ENCODE measurements at regions of chr2 and their contacts with region 1.

Region 1: DNA sequence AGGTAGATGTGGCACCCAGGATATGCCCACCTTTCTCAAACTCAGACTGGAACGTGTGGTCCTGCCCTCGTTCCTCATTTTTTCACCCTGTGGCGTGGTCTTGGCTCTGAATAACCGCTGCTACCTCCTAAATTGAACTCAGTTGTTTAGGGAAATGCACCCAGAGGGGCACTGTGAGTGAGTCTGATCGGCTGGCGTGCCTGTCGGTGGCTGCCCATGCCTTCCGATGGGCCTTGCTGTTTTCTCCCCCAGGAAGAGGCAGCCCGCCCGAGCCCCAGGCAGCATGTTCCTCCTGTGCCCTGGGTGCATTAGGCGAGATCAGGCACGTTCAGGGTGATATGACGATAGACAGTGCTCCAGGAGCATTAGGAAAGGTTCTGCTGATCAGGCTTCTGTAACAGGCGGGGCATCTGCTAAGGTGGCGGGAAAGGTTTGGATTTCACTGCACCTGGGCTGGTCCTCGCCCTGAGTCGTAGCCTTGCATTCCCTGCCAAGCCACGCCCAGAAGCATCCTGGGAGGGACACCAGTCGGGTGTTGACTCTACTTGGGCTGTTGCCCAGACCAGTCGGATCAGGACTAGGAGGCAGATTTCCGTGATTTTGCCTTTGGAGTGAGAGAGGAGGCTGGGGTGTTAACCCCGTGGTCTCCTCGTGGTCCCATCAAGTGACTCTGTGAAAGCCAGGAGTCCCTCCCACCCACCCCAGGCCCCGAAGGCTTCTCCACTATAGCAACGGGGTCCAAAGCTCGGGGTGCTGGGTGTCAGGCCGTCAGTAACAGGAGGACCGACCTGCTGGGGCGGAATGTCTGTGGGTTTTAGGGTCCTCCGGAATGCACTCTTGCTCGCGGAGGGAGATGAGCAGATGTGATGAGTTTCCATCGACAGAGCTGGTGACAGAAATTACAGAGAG is 75.1 kb downstream of the SH3BP4 start:
- DNase-seq: peak; percentile 98 to 99
- H3K4me3 ChIP-seq: peak overlapping the region; percentile 61
- H3K27ac ChIP-seq: peak overlapping the region; percentile 98
- H3K4me1 ChIP-seq: peaks cover 79% of the 10 kb centered on the region
- H3K27me3 ChIP-seq: no peaks in the 10 kb centered on the region
- CTCF ChIP-seq: no peak

Region 2: GRCh38 chr2:233867993-233868532 is 1158.8 kb before region 1 on chr2 and contains the start of gene MSL3B:
- CTCF ChIA-PET with region 1: no interaction called
- POLR2A ChIA-PET with region 1: interaction called, 15 read pairs
- intact Hi-C with region 1: no loop called
- DNase-seq: peak; percentile 46 to 75
- H3K4me3 ChIP-seq: peak within 1 kb of the TSS; percentile 64
- H3K27ac ChIP-seq: peak within 1 kb of the TSS; percentile 58
- H3K4me1 ChIP-seq: peaks cover 24% of the 10 kb centered on the region
- H3K27me3 ChIP-seq: peaks cover 5% of the 10 kb centered on the region; the same call in 1 of the 2 replicates
- CTCF ChIP-seq: no peak

Region 3: GRCh38 chr2:233882353-233882752 is 1144.5 kb before region 1 on chr2:
- CTCF ChIA-PET with region 1: no interaction called
- POLR2A ChIA-PET with region 1: no interaction called
- intact Hi-C with region 1: no loop called
- DNase-seq: no peak
- H3K4me3 ChIP-seq: no peak overlapping the region
- H3K27ac ChIP-seq: no peak overlapping the region
- H3K4me1 ChIP-seq: no peaks in the 10 kb centered on the region
- H3K27me3 ChIP-seq: peaks cover 15% of the 10 kb centered on the region; the same call in 1 of the 2 replicates
- CTCF ChIP-seq: no peak

Region 4: GRCh38 chr2:234881413-234882241 is 145.3 kb before region 1 on chr2:
- CTCF ChIA-PET with region 1: interaction called, 6 read pairs
- POLR2A ChIA-PET with region 1: no interaction called
- intact Hi-C with region 1: loop called (anchors 2 kb)
- DNase-seq: peak; percentile 88 to 92
- H3K4me3 ChIP-seq: peak overlapping the region; percentile 41; the same call in 1 of the 2 replicates
- H3K27ac ChIP-seq: peak overlapping the region; percentile 82
- H3K4me1 ChIP-seq: peaks cover 47% of the 10 kb centered on the region
- H3K27me3 ChIP-seq: no peaks in the 10 kb centered on the region
- CTCF ChIP-seq: peak; percentile 97

Region 5: GRCh38 chr2:234996069-234996940 is 30.6 kb before region 1 on chr2:
- CTCF ChIA-PET with region 1: no interaction called
- POLR2A ChIA-PET with region 1: interaction called, 3 read pairs
- intact Hi-C with region 1: loop called (anchors 1 kb)
- DNase-seq: peak in 1 of 2 experiments; percentile 89
- H3K4me3 ChIP-seq: no peak overlapping the region
- H3K27ac ChIP-seq: 0 out of 2 replicates have a peak overlapping the region, but pooled peaks have one; percentile 6
- H3K4me1 ChIP-seq: peaks cover 41% of the 10 kb centered on the region
- H3K27me3 ChIP-seq: no peaks in the 10 kb centered on the region
- CTCF ChIP-seq: no peak

Region 6: GRCh38 chr2:235045336-235045972 is 18.6 kb after region 1 on chr2:
- CTCF ChIA-PET with region 1: interaction called, 11 read pairs
- POLR2A ChIA-PET with region 1: interaction called, 5 read pairs
- intact Hi-C with region 1: loop called (anchors 1 kb)
- DNase-seq: peak; percentile 75 to 94
- H3K4me3 ChIP-seq: peak overlapping the region; percentile 10; the same call in 1 of the 2 replicates
- H3K27ac ChIP-seq: peak overlapping the region; percentile 80
- H3K4me1 ChIP-seq: peaks cover 73% of the 10 kb centered on the region
- H3K27me3 ChIP-seq: no peaks in the 10 kb centered on the region
- CTCF ChIP-seq: no peak

Region 7: DNA sequence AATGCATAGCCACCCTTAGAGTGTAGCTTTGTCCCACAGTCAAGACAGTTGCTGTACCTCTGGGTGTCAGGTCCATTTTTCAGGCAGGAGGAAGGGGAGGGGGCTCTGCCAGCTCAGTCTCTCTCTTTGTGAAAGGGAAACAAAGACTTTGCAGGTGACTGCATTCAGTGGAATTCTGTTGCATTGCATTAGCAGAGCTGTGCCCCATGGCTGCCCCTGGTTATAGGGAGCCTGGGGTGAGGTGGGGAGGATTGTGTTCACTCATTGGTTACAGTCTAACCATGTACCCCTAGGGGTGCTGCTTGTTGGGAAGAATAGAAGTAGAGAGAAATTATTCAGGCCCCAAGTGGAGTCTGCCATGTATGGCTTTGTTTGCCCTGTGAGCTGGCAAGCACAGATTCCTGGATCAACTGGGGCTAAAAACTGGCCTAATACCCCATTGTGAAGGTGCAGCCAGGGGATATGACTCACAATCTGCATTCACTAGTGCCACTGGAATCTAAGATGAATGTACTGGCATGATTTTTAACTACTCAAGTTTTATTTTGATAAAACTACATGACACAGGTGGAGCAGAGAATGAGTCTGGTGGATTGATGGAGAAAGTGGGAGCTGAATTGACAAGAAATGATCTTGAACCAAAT is 43.3 kb after region 1 on chr2:
- CTCF ChIA-PET with region 1: no interaction called
- POLR2A ChIA-PET with region 1: no interaction called
- intact Hi-C with region 1: loop called (anchors 1 kb)
- DNase-seq: peak; percentile 72 to 84
- H3K4me3 ChIP-seq: no peak overlapping the region
- H3K27ac ChIP-seq: peak overlapping the region; percentile 16
- H3K4me1 ChIP-seq: peaks cover 16% of the 10 kb centered on the region
- H3K27me3 ChIP-seq: no peaks in the 10 kb centered on the region
- CTCF ChIP-seq: no peak

Region 8: GRCh38 chr2:235514627-235515358 is 487.9 kb after region 1 on chr2:
- CTCF ChIA-PET with region 1: no interaction called
- POLR2A ChIA-PET with region 1: no interaction called
- intact Hi-C with region 1: no loop called
- DNase-seq: no peak
- H3K4me3 ChIP-seq: no peak overlapping the region
- H3K27ac ChIP-seq: no peak overlapping the region
- H3K4me1 ChIP-seq: peaks cover 20% of the 10 kb centered on the region
- H3K27me3 ChIP-seq: no peaks in the 10 kb centered on the region
- CTCF ChIP-seq: 0 out of 2 replicates have a peak, but pooled peaks have one; percentile 16

Measured in PC-9 (cell line).